Heart right ventricle (tissue), 16 donors: ENCODE measurements at regions of chr10 and their contacts with region 1.

Region 1: DNA sequence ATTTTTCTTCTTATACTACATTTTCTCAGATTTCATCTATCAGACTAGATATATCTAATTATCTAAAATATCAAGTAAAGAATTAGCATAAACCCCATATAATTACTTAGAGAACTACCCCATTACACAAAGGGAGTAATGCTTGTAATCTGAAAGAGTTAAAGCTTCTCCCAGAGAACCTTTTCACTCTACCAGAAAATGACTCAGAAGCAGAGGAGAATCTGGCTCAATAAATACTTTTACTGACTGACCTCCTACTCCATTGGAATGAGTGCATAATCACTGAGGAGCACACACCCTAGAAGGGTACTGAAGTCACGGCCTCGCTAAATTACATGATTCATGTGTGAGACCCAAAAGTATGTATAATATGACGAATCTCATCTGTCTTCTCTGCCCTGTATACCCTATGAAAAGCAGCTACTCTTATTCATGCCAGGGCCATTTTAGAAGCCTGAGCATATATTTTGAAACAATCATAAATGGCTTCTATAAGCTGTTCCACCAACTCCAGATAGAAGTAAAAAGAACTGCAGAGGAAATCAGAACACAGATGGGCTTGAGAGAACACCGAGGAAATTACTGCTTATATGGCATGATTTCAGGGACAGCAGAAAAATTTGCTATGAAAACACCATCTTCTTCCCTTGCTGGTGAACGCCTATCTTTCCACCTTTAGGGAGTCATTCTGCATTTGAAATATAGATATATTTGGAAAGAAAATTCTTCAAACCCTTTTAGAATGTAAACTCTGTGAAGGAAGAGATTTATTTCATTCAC is 32.7 kb downstream of the DNMBP start:
- DNase-seq: no peak
- ATAC-seq: peak; percentile 46 to 93 (median 83)
- H3K4me3 ChIP-seq: peak overlapping the region in 1 of 10 donors; percentile 4
- H3K27ac ChIP-seq: peak overlapping the region; percentile 21 to 80 (median 68)
- H3K4me1 ChIP-seq: peaks cover 0 to 67% (median 51%) of the 10 kb centered on the region in 9 donors
- H3K27me3 ChIP-seq: no peaks in the 10 kb centered on the region
- CTCF ChIP-seq: no peak

Region 2: GRCh38 chr10:99926925-99927720 is 50.0 kb before region 1 on chr10:
- intact Hi-C with region 1: loop called in 1 of 10 experiments (anchors 5 kb)
- DNase-seq: peak; percentile 50 to 76
- ATAC-seq: peak; percentile 53 to 89 (median 71)
- H3K4me3 ChIP-seq: peak overlapping the region in 1 of 10 donors; percentile 5
- H3K27ac ChIP-seq: peak overlapping the region in 5 of 10 donors; percentile 2 to 73 (median 46)
- H3K4me1 ChIP-seq: peaks cover 0 to 62% (median 34%) of the 10 kb centered on the region in 9 donors
- H3K27me3 ChIP-seq: no peaks in the 10 kb centered on the region
- CTCF ChIP-seq: no peak

Region 3: GRCh38 chr10:100878291-100878910 is 901.3 kb after region 1 on chr10:
- intact Hi-C with region 1: no loop called
- DNase-seq: peak in 1 of 2 donors; percentile 35
- ATAC-seq: peak; percentile 69 to 88 (median 77)
- H3K4me3 ChIP-seq: no peak overlapping the region
- H3K27ac ChIP-seq: no peak overlapping the region
- H3K4me1 ChIP-seq: peaks cover 0 to 16% (median 3%) of the 10 kb centered on the region in 9 donors
- H3K27me3 ChIP-seq: peaks cover 0 to 61% (median 43%) of the 10 kb centered on the region in 7 donors
- CTCF ChIP-seq: peak in 8 of 9 donors; percentile 30 to 75 (median 64)